A549 (cell line): ENCODE measurements at regions of chr10 and their contacts with region 1.

Region 1: GRCh38 chr10:21993360-21994001 is 10.0 kb downstream of the DNAJC1 start:
- DNase-seq: peak in 1 of 2 experiments; percentile 41
- ATAC-seq: no peak
- H3K4me3 ChIP-seq: no peak overlapping the region
- H3K27ac ChIP-seq: no peak overlapping the region
- H3K4me1 ChIP-seq: peaks cover 6% of the 10 kb centered on the region; the same call in 1 of the 3 replicates
- CTCF ChIP-seq: peak; percentile 75
- EP300 ChIP-seq: no peak
- POLR2A ChIP-seq: no peak
- RAD21 ChIP-seq: peak; percentile 67 to 77

Region 2: GRCh38 chr10:22010973-22011408 is 17.5 kb after region 1 on chr10:
- CTCF ChIA-PET with region 1: interaction called, 11 read pairs
- POLR2A ChIA-PET with region 1: no interaction called
- DNase-seq: peak in 1 of 2 experiments; percentile 19
- ATAC-seq: no peak
- H3K4me3 ChIP-seq: no peak overlapping the region
- H3K27ac ChIP-seq: no peak overlapping the region
- H3K4me1 ChIP-seq: no peaks in the 10 kb centered on the region
- CTCF ChIP-seq: peak; percentile 61
- EP300 ChIP-seq: no peak
- POLR2A ChIP-seq: no peak
- RAD21 ChIP-seq: peak in 1 of 2 experiments; percentile 65; a peak in 2 of 5 replicates

Region 3: GRCh38 chr10:22133749-22134624 is 140.5 kb after region 1 on chr10:
- CTCF ChIA-PET with region 1: no interaction called
- POLR2A ChIA-PET with region 1: no interaction called
- DNase-seq: no peak
- ATAC-seq: no peak
- H3K4me3 ChIP-seq: no peak overlapping the region
- H3K27ac ChIP-seq: no peak overlapping the region
- H3K4me1 ChIP-seq: no peaks in the 10 kb centered on the region
- CTCF ChIP-seq: no peak
- EP300 ChIP-seq: no peak
- POLR2A ChIP-seq: no peak
- RAD21 ChIP-seq: no peak